AG04449 (cell line): ENCODE measurements at regions of chr11 and their contacts with region 1.

Region 1: DNA sequence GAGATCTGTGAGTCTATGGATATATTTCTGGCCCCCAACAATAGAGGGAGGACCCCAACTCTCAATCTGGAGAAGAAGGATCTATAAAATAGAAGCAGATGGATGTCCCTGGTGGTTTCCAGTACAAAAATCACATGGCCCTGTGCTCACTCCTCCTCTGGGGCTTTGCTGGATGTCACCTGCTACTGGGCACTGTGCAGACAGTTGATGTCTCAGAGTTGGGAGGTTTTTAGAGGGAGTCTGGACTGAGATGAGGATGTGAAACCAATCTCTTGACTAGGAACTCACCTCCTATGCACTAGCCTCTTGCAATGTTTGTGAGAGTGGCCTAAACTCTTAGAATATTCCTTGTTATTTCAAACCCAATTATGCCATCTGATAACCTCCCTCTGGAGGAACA is 107.2 kb downstream of the SCN3B start:
- DNase-seq: no peak
- H3K4me3 ChIP-seq: no peak overlapping the region
- CTCF ChIP-seq: no peak

Region 2: DNA sequence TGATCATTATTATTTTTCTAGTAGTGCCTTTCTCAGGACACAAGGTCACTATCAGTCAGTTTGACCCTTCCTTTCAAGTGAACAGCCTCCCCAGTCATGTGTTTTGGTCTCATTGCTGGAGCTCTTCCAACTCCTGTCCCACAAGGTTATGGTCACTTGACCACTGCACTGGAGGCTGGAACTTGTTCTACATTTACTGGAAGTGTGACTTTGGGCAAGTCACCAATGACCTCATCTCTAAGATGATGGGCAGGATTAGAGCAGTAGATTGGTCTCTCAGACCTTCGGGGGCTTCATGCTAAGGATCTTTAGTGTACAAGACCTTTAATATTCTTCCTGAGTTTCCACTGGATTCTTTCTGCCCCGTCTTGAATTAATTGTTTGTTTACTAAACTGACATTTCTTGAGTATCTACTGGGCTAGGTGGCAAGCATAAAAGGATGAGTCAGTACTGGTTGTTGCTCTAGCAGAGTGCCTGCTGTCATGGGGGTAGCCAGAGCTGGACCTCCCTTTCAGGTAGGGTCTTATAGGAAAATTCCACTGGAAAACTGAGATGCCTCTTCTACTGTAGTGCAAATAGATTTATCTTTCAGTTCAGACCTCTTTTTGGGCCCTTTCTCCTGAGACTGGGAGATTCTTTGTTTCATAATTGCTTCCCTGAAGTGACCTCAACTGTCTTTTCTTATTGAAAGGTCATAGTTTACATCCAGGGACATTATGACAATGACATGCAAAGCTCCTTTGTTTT is 10.3 kb before region 1 on chr11:
- CTCF ChIA-PET with region 1: interaction called, 11 read pairs
- POLR2A ChIA-PET with region 1: no interaction called
- DNase-seq: no peak
- H3K4me3 ChIP-seq: no peak overlapping the region
- CTCF ChIP-seq: no peak

Region 3: DNA sequence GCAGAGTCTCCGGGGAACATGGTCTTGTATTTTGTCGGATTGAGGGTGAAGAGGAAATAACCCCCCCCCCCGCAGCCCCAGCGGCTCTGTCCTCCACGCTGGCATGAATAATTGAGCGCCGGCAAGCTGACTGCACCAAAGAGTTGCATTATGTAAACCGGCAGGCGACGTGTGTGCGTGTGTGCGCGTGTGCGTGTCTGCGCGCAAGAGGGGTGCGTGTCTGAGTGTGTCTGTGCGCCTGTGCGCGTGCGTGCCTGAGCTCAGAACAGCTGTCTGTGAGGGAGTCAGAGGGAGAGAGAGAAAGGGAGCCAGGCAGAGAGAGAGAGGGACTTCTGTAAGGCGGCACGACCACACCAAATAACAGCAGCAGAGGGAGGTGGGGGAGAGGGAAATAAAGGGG is 12.8 kb after region 1 on chr11:
- CTCF ChIA-PET with region 1: interaction called, 12 read pairs
- POLR2A ChIA-PET with region 1: interaction called, 10 read pairs
- DNase-seq: peak; percentile 59
- H3K4me3 ChIP-seq: peak overlapping the region; percentile 48
- CTCF ChIP-seq: no peak